Common myeloid progenitor, CD34-positive (primary cell): ENCODE measurements at regions of chrX and their contacts with region 1.

Region 1: GRCh38 chrX:100768679-100769338 is 36.9 kb upstream of the SYTL4 start:
- DNase-seq: peak; percentile 63 to 88 (median 80)
- H3K4me3 ChIP-seq: no peak overlapping the region
- H3K27ac ChIP-seq: no peak overlapping the region
- H3K4me1 ChIP-seq: peaks cover 0 to 5% (median 0%) of the 10 kb centered on the region in 4 experiments
- H3K27me3 ChIP-seq: no peaks in the 10 kb centered on the region

Region 2: GRCh38 chrX:100587885-100588284 is 180.9 kb before region 1 on chrX:
- CTCF ChIA-PET with region 1: no interaction called
- POLR2A ChIA-PET with region 1: no interaction called
- DNase-seq: no peak
- H3K4me3 ChIP-seq: no peak overlapping the region
- H3K27ac ChIP-seq: no peak overlapping the region
- H3K4me1 ChIP-seq: no peaks in the 10 kb centered on the region
- H3K27me3 ChIP-seq: peaks cover 0 to 88% (median 62%) of the 10 kb centered on the region in 5 experiments

Region 3: GRCh38 chrX:100625985-100626491 is 142.8 kb before region 1 on chrX:
- CTCF ChIA-PET with region 1: no interaction called
- POLR2A ChIA-PET with region 1: no interaction called
- DNase-seq: peak; percentile 67 to 93 (median 90)
- H3K4me3 ChIP-seq: no peak overlapping the region
- H3K27ac ChIP-seq: no peak overlapping the region
- H3K4me1 ChIP-seq: peaks cover 8 to 15% (median 9%) of the 10 kb centered on the region in 4 experiments
- H3K27me3 ChIP-seq: peaks cover 0 to 41% (median 29%) of the 10 kb centered on the region in 5 experiments

Region 4: GRCh38 chrX:100674705-100675104 is 94.1 kb before region 1 on chrX:
- CTCF ChIA-PET with region 1: interaction called, 46 read pairs
- POLR2A ChIA-PET with region 1: no interaction called
- DNase-seq: no peak
- H3K4me3 ChIP-seq: no peak overlapping the region
- H3K27ac ChIP-seq: no peak overlapping the region
- H3K4me1 ChIP-seq: peaks cover 0 to 4% (median 3%) of the 10 kb centered on the region in 4 experiments
- H3K27me3 ChIP-seq: peaks cover 0 to 3% (median 0%) of the 10 kb centered on the region in 5 experiments

Region 5: GRCh38 chrX:100685284-100685996 is 83.4 kb before region 1 on chrX:
- CTCF ChIA-PET with region 1: interaction called, 141 read pairs
- POLR2A ChIA-PET with region 1: no interaction called
- DNase-seq: peak; percentile 78 to 92 (median 86)
- H3K4me3 ChIP-seq: no peak overlapping the region
- H3K27ac ChIP-seq: no peak overlapping the region
- H3K4me1 ChIP-seq: peaks cover 3 to 27% (median 18%) of the 10 kb centered on the region in 4 experiments
- H3K27me3 ChIP-seq: no peaks in the 10 kb centered on the region

Region 6: GRCh38 chrX:100743009-100743607 is 25.7 kb before region 1 on chrX:
- CTCF ChIA-PET with region 1: interaction called, 15 read pairs
- POLR2A ChIA-PET with region 1: no interaction called
- DNase-seq: peak; percentile 78 to 92 (median 85)
- H3K4me3 ChIP-seq: no peak overlapping the region
- H3K27ac ChIP-seq: peak overlapping the region; percentile 19 to 77
- H3K4me1 ChIP-seq: peaks cover 0 to 38% (median 15%) of the 10 kb centered on the region in 4 experiments
- H3K27me3 ChIP-seq: peaks cover 0 to 3% (median 0%) of the 10 kb centered on the region in 5 experiments

Region 7: DNA sequence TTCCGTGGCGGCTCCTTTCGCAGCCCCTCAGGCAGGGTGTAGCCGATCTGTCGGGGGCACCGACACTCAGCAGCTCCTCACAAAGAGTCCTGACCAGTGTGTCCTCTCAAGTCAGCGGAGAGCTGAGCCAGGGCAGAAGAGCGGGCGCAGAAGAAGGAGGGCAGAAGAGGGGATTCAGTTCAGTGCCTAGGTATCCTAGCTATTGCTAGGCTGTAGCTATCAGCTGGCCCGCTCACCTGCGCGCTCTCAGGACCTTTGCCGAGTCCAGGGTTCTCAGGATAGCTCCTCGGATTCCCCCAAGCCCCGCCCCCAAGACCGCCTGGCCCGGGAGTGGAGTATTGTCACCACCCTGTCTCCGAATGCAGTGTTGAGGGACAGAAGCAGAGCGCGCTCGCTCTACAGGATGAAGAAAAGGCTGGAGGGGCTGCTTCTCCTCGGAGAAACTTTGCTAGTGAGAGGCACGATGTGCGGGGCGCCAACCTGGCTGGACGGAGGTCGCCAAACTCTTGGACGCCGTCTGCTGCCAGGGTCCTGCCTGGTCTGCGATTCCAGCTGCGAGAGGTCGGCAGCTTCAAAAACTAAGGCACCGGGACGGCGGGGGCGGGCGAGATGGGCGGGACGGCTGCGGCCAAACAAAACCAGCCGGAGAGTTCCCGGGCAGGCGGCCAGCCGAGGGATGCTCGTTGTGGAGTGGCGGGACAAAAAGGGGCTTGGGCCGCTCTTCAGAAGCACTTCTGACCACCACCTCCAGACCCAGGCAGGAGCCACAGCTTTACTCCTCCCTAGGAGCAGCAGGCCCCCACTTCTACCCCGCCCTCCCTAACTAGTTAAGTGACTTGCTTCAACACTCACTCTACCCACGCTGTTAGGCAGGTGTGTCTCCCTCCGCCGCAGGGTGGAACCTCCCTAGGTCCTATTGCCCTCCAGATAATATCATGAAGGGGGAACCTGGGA is 160.1 kb after region 1 on chrX and contains the start of gene XKRX:
- CTCF ChIA-PET with region 1: no interaction called
- POLR2A ChIA-PET with region 1: no interaction called
- DNase-seq: peak in 2 of 3 donors; percentile 15 to 35
- H3K4me3 ChIP-seq: peak within 1 kb of the TSS in 6 of 7 experiments; percentile 4 to 66 (median 45)
- H3K27ac ChIP-seq: no peak within 1 kb of the TSS
- H3K4me1 ChIP-seq: peaks cover 0 to 12% (median 9%) of the 10 kb centered on the region in 4 experiments
- H3K27me3 ChIP-seq: peaks cover 0 to 29% (median 8%) of the 10 kb centered on the region in 5 experiments